OCI-LY7 (cell line): ENCODE measurements at regions of chr3 and their contacts with region 1.

Region 1: GRCh38 chr3:52238761-52239701 is at the start of gene TWF2:
- DNase-seq: peak; percentile 88
- H3K4me3 ChIP-seq: peak within 1 kb of the TSS; percentile 81
- H3K27ac ChIP-seq: peak within 1 kb of the TSS; percentile 47
- H3K4me1 ChIP-seq: peaks cover 29% of the 10 kb centered on the region
- CTCF ChIP-seq: peak; percentile 71
- total RNA-seq, gene TWF2: 40.0 and 52.8 TPM in 2 replicates

Region 2: GRCh38 chr3:52197842-52198668 is 41.0 kb before region 1 on chr3 and contains the start of gene ALAS1:
- CTCF ChIA-PET with region 1: no interaction called
- POLR2A ChIA-PET with region 1: no interaction called
- intact Hi-C with region 1: no loop called
- DNase-seq: peak; percentile 95
- H3K4me3 ChIP-seq: peak within 1 kb of the TSS; percentile 84
- H3K27ac ChIP-seq: peak within 1 kb of the TSS; percentile 46
- H3K4me1 ChIP-seq: peaks cover 31% of the 10 kb centered on the region
- CTCF ChIP-seq: no peak
- total RNA-seq, gene ALAS1: 24.5 and 34.4 TPM in 2 replicates

Region 3: GRCh38 chr3:52253314-52254304 is 14.6 kb after region 1 on chr3:
- CTCF ChIA-PET with region 1: interaction called, 3 read pairs
- POLR2A ChIA-PET with region 1: interaction called, 28 read pairs
- intact Hi-C with region 1: loop called (anchors 1 kb)
- DNase-seq: peak; percentile 91
- H3K4me3 ChIP-seq: peak overlapping the region; percentile 8
- H3K27ac ChIP-seq: peak overlapping the region; percentile 76
- H3K4me1 ChIP-seq: peaks cover 23% of the 10 kb centered on the region
- CTCF ChIP-seq: no peak

Region 4: DNA sequence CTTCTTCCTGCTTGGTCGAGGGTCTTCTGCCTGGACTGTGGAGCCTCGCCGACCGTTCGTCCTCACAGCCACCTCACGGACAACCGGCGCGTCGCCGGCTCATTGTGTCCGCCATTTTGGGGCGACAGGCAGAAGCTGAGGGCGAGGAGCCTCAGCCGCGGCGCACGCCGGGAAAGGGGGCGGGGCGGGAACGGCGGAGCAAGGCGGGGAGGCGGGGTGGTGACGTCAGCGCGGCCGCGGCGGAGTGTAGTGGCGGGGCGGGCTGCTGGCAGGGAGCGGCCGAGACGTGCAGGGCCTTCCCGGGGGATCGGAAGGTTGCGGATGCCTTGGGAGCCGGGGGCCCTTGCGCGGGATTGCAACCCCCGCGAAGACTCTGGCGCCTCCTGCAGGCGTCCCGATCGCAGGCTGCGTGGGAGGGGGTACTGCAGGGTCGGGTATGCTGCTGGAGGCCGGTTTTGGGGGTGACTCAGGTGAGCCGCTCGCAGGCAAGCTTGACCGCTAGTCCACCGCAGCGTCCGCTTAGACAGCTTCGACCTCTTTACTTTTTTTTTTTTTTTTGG is 39.6 kb after region 1 on chr3 and contains the start of gene WDR82:
- CTCF ChIA-PET with region 1: interaction called, 3 read pairs
- POLR2A ChIA-PET with region 1: interaction called, 6 read pairs
- intact Hi-C with region 1: loop called (anchors 1 kb)
- DNase-seq: peak; percentile 94
- H3K4me3 ChIP-seq: peak within 1 kb of the TSS; percentile 70
- H3K27ac ChIP-seq: peak within 1 kb of the TSS; percentile 67
- H3K4me1 ChIP-seq: peaks cover 29% of the 10 kb centered on the region
- CTCF ChIP-seq: peak; percentile 60
- total RNA-seq, gene WDR82: 27.8 and 38.5 TPM in 2 replicates